Activated CD4-positive, alpha-beta T cell treated with anti-CD3 and anti-CD28 coated beads for 36 hours (primary cell): ENCODE measurements at regions of chr16 and their contacts with region 1.

Region 1: DNA sequence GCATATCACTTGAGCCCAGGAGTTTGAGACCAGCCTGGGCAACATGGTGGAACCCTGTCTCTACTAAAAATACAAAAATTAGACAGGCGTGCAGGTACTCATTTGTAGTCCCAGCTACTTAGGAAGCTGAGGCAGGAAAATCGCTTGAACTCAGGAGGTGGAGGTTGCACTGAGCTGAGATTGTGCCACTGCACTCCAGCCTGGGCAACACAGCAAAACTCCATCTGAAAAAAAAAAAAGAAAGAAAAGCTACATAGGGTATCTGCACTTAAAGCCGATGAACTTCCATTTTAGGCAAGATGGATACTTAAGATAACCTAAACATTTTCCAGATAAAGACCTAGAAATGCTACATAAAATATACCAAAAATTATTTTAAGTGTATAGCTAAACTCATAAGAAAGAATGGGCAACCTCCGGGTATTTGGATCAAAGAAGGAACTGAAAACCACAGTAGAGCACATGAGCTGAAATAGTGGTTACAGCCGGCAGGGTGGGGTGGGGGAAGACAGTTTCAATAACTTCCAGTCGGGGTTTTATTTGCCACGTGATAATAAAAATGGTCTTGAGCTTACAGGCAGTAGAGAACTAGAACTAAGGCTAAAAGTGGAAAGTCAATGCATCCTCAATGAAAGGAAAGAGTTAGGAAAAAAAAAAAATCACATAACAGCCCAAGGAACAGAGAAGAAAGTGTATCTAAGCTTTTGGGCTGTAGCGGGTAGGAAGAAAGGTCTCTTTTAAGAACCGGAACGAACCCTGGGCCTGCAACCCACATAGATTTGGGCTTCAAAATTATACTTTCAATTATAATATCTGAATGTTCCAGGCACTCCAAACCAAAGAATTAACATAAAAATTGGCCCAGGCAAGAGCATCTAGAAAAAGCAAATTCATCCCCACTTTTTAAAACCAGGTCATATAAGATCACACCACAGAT is 53.1 kb downstream of the CFDP1 start:
- DNase-seq: peak; percentile 49
- ATAC-seq: peak; percentile 53
- H3K4me3 Mint-ChIP-seq: no peak overlapping the region
- H3K27ac Mint-ChIP-seq: no peak overlapping the region
- H3K4me1 Mint-ChIP-seq: peaks cover 49% of the 10 kb centered on the region
- H3K27me3 Mint-ChIP-seq: peaks cover 12% of the 10 kb centered on the region

Region 2: GRCh38 chr16:75288596-75289120 is 91.5 kb before region 1 on chr16:
- CTCF ChIA-PET with region 1: interaction called, 3 read pairs
- POLR2A ChIA-PET with region 1: no interaction called
- intact Hi-C with region 1: loop called in 1 of 2 experiments (anchors 5 kb)
- DNase-seq: peak; percentile 83
- ATAC-seq: peak; percentile 78
- H3K4me3 Mint-ChIP-seq: no peak overlapping the region
- H3K27ac Mint-ChIP-seq: no peak overlapping the region
- H3K4me1 Mint-ChIP-seq: peaks cover 15% of the 10 kb centered on the region
- H3K27me3 Mint-ChIP-seq: peaks cover 7% of the 10 kb centered on the region

Region 3: DNA sequence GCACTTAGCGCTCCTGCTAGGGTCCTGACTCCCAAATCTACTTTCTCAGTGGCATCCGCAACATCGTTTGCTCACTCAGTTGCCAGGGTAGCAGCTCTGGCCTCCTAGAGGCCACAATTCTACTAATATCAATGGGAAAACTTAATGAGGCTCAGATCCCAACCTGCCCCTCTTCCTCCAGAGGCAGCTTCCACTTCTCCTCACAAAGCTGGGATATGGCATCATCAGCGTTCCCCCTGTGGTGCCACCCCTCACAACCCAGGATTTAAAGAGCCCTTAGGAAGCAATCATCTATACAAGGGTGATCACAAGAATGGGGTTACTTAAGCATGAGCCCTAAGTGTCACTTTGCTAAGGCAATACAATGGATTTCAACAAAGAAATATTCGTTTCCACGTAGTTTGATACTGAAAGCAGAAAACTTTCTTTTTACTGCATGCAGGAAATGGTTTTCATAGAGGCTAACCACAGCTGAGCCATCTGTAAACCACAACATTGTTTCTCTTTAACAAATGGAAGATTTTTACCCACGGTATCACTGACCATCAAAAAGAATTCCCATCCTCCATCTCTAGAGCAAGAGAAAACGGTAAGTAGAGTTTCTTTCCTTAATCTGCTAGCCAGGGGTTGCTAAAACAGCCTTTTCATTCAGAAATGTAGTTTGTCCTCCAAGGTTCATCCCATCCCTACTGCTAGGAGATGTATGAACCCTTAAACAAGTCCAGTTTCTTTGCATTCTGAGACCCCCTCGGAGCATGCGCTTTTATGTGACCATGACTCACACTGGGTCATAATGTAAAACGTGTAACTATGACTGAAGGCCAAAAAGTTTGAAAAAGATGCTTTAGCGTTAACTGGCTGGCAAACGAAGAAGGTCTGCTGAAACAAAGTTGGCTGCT is 60.4 kb before region 1 on chr16:
- CTCF ChIA-PET with region 1: interaction called, 3 read pairs
- POLR2A ChIA-PET with region 1: no interaction called
- intact Hi-C with region 1: loop called in 1 of 2 experiments (anchors 2 kb)
- DNase-seq: peak; percentile 25
- ATAC-seq: peak; percentile 75
- H3K4me3 Mint-ChIP-seq: no peak overlapping the region
- H3K27ac Mint-ChIP-seq: no peak overlapping the region
- H3K4me1 Mint-ChIP-seq: peaks cover 35% of the 10 kb centered on the region
- H3K27me3 Mint-ChIP-seq: peaks cover 2% of the 10 kb centered on the region

Region 4: DNA sequence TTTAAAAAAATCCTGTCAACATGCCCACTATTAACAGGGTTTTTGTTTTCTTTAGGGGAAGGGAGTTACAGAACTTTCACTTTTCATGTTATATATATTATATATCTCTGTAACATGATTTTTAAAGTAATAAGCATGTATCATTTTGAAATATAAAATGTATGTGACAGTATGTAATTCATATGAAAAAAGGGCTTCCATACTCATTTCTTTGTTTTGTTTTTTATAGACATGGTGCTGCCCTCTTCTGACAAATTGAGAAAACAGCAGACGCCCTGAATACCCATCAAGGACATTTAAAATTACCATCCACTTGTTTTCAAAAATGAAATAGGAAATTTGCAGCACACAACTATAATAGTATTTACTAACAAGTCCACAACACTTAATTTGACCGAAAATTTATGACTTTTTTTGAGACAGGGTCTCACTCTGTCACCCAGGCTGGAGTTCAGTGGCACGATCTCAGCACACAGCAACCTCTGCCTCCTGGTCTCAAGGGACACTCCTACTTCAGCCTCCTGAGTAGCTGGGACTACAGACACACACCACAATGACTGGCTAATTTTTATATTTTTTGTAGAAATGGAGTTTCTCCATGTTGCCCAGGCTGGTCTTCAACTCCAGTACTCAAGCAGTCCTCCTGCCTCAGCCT is 22.8 kb after region 1 on chr16:
- CTCF ChIA-PET with region 1: interaction called, 9 read pairs
- POLR2A ChIA-PET with region 1: no interaction called
- intact Hi-C with region 1: loop called in 1 of 2 experiments (anchors 1 kb)
- DNase-seq: no peak
- ATAC-seq: peak; percentile 76
- H3K4me3 Mint-ChIP-seq: no peak overlapping the region
- H3K27ac Mint-ChIP-seq: peak overlapping the region; percentile 19
- H3K4me1 Mint-ChIP-seq: peaks cover 17% of the 10 kb centered on the region
- H3K27me3 Mint-ChIP-seq: no peaks in the 10 kb centered on the region

Region 5: GRCh38 chr16:75527825-75528299 is 147.7 kb after region 1 on chr16:
- CTCF ChIA-PET with region 1: no interaction called
- POLR2A ChIA-PET with region 1: no interaction called
- intact Hi-C with region 1: no loop called
- DNase-seq: no peak
- ATAC-seq: no peak
- H3K4me3 Mint-ChIP-seq: no peak overlapping the region
- H3K27ac Mint-ChIP-seq: no peak overlapping the region
- H3K4me1 Mint-ChIP-seq: no peaks in the 10 kb centered on the region
- H3K27me3 Mint-ChIP-seq: no peaks in the 10 kb centered on the region